Activated naive CD4-positive, alpha-beta T cell treated with anti-CD3 and anti-CD28 coated beads for 36 hours (primary cell): ENCODE measurements at regions of chr9 and their contacts with region 1.

Region 1: DNA sequence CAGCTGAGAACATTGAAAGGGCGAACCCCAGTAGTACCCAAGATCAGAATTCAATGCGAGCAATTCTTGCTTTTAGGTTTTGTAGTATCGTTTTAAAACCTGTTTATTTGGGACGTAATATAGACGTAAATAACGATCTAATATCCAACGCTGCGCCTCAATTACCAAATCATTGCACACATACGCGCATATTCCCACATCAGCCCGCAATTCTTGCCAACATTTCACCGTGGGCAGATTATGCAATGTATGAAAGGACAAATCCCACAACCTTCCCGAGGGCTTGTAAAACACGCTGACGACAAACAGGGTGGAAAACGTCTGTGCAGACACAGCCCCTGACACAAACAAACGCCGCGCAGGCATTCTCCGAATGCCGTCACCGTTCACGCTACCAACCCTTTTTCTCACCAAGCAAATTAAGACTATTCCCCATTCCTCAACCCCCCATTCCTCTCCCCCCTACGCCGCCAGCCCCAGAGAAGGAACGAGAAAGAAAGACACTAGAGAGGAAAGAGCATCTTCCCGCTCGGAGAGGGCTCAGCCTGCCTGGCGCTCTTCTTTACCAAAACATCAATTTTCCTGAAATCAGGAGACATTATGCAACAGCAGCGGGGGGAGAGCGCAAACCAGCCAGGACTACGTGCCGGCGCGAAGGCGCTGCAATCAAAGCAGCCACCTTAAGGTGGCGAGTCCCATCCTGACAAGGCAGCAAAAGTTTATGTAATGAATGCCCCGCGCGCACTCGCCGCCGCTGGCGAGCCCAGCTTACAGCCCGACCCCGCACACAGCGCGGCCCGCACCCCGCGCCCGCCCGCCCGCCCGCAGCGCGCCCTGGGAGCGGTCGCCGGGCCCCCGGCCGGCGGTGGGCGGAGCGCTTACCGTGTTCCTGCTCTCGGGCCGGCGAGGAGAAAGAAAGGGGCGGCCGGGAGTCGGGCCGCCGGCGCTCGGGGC is 597 bp downstream of the NFIL3 start:
- DNase-seq: peak; percentile 74
- H3K4me3 Mint-ChIP-seq: peak overlapping the region; percentile 94
- H3K27ac Mint-ChIP-seq: peak overlapping the region; percentile 81
- H3K4me1 Mint-ChIP-seq: peaks cover 57% of the 10 kb centered on the region
- H3K27me3 Mint-ChIP-seq: peaks cover 9% of the 10 kb centered on the region

Region 2: GRCh38 chr9:90985631-90986030 is 437.4 kb before region 1 on chr9:
- CTCF ChIA-PET with region 1: interaction called, 3 read pairs
- intact Hi-C with region 1: loop called (anchors 5 kb)
- DNase-seq: no peak
- H3K4me3 Mint-ChIP-seq: no peak overlapping the region
- H3K27ac Mint-ChIP-seq: no peak overlapping the region
- H3K4me1 Mint-ChIP-seq: no peaks in the 10 kb centered on the region
- H3K27me3 Mint-ChIP-seq: peaks cover 2% of the 10 kb centered on the region

Region 3: GRCh38 chr9:91089405-91090129 is 333.5 kb before region 1 on chr9:
- CTCF ChIA-PET with region 1: interaction called, 7 read pairs
- intact Hi-C with region 1: loop called (anchors 1 kb)
- DNase-seq: peak; percentile 62
- H3K4me3 Mint-ChIP-seq: no peak overlapping the region
- H3K27ac Mint-ChIP-seq: no peak overlapping the region
- H3K4me1 Mint-ChIP-seq: peaks cover 8% of the 10 kb centered on the region
- H3K27me3 Mint-ChIP-seq: peaks cover 6% of the 10 kb centered on the region

Region 4: GRCh38 chr9:91150998-91151717 is 271.9 kb before region 1 on chr9:
- CTCF ChIA-PET with region 1: interaction called, 3 read pairs
- intact Hi-C with region 1: loop called (anchors 1 kb)
- DNase-seq: peak; percentile 66
- H3K4me3 Mint-ChIP-seq: peak overlapping the region; percentile 15
- H3K27ac Mint-ChIP-seq: peak overlapping the region; percentile 89
- H3K4me1 Mint-ChIP-seq: peaks cover 62% of the 10 kb centered on the region
- H3K27me3 Mint-ChIP-seq: peaks cover 2% of the 10 kb centered on the region

Region 5: GRCh38 chr9:91359734-91360470 is 63.1 kb before region 1 on chr9:
- CTCF ChIA-PET with region 1: interaction called, 9 read pairs
- intact Hi-C with region 1: loop called (anchors 1 kb)
- DNase-seq: no peak
- H3K4me3 Mint-ChIP-seq: peak overlapping the region; percentile 91
- H3K27ac Mint-ChIP-seq: peak overlapping the region; percentile 54
- H3K4me1 Mint-ChIP-seq: peaks cover 47% of the 10 kb centered on the region
- H3K27me3 Mint-ChIP-seq: no peaks in the 10 kb centered on the region

Region 6: DNA sequence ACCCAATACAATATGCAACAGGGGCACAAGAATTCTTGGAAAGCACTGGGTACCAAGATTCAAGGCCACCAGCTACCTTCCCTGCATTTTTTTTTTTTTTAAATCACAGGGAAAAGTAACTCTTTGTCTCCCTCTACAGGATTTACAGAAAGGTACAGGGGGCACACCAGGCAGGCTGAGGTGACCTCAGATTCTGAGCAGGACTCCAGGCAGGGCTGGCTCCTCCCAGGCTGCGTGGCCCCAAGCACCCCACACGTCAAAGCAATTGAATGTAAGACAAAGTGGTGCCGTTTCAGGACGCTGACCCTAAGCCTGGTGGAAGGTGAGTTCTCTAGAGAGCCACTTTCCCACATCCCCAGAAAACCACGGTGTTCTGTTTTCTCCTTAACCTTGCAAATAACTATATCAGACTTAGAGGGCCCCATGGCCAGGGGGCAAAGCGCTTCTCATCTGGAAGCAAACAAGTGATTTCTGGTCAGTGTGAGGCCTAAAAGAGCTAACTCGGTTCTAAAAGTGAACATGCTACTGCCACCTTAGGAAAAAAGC is 304.4 kb after region 1 on chr9:
- CTCF ChIA-PET with region 1: interaction called, 3 read pairs
- intact Hi-C with region 1: loop called (anchors 2 kb)
- DNase-seq: peak; percentile 49
- H3K4me3 Mint-ChIP-seq: no peak overlapping the region
- H3K27ac Mint-ChIP-seq: no peak overlapping the region
- H3K4me1 Mint-ChIP-seq: no peaks in the 10 kb centered on the region
- H3K27me3 Mint-ChIP-seq: peaks cover 2% of the 10 kb centered on the region